GM10248 (cell line): ENCODE measurements at regions of chr3 and their contacts with region 1.

Region 1: DNA sequence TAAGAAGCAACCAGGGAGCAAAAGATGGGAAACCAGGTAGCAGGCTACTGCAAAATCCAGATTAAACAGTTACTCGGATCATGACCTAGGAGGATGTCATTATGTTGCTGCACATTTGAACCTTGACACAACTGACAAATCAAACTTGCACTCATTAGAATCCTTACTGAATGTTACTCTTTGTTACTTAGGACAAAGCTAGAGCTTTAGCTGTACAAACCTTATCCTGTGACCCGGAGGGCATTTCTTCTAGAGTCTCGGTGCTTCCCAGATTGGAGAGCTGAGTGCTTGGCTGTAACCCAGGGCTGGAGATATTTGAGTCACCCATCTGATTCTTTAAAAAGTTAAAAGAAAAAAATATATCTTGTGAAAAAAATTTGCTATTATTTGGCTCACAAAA is 43.4 kb downstream of the DCP1A start:
- DNase-seq: no peak
- CTCF ChIP-seq: no peak

Region 2: DNA sequence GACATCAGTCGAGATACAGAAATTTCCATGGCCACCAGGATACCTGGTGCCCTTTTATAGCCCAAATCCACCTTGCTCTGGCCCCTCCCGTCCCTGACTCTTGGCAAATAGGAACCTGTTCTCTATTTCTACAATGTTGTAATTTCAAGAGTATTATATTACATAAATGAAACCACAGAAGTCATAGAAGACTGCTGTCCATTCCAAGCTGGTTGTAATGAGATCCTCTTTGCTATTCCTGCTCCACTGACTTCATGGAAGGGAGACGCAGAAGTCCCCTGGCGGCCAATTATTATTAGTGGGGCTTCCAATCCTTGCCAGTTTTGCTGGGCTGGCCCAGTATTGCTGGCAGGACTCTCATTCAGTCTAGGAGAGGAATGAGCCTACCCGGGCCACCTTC is 16.7 kb after region 1 on chr3:
- CTCF ChIA-PET with region 1: interaction called, 14 read pairs
- POLR2A ChIA-PET with region 1: interaction called, 3 read pairs
- DNase-seq: no peak
- CTCF ChIP-seq: no peak